CD8-positive, alpha-beta memory T cell (primary cell): ENCODE measurements at regions of chr5 and their contacts with region 1.

Region 1: GRCh38 chr5:140547508-140548299 is at the start of gene EIF4EBP3:
- DNase-seq: peak; percentile 78 to 91 (median 82)
- H3K4me3 ChIP-seq: peak within 1 kb of the TSS; percentile 70
- H3K4me3 Mint-ChIP-seq: peak within 1 kb of the TSS; percentile 80 to 88 (median 84)
- H3K27ac ChIP-seq: peak within 1 kb of the TSS; percentile 66
- H3K27ac Mint-ChIP-seq: peak within 1 kb of the TSS; percentile 87 to 95 (median 94)
- H3K4me1 ChIP-seq: peaks cover 32% of the 10 kb centered on the region
- H3K4me1 Mint-ChIP-seq: peaks cover 21 to 39% (median 33%) of the 10 kb centered on the region in 3 donors
- H3K27me3 ChIP-seq: no peaks in the 10 kb centered on the region
- H3K27me3 Mint-ChIP-seq: no peaks in the 10 kb centered on the region
- total RNA-seq, gene EIF4EBP3: 11.1 to 11.9 TPM

Region 2: DNA sequence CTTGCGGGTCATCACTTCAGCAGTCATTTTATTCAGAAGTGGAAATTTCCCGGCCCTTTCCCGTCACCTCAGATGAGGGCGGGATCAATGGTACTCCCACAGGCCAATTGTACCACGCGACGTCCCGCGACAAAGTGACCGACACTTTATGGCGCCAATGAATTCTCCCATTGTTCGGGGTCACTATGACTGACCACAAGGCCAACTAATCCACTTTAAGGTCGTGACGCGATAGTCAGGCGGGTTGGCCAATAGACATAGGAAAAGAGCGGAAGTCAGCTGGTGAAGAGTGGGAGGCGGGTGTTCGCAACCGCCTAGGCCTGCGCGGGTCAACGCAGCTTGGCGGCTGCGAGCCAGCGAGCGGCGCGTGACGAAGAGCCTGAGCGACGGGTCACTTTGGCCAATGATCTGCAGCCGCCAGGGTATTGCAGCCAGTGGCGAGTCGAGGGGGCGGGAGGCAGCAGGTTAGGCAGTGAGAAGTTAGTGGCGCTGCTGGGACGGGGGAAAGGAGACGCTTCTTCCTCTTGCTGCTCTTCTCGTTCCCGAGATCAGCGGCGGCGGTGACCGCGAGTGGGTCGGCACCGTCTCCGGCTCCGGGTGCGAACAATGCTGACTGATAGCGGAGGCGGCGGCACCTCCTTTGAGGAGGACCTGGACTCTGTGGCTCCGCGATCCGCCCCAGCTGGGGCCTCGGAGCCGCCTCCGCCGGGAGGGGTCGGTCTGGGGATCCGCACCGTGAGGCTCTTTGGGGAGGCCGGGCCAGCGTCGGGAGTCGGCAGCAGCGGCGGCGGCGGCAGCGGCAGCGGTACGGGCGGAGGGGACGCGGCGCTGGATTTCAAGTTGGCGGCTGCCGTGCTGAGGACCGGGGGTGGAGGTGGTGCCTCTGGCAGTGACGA is 146.1 kb before region 1 on chr5 and contains the start of gene ANKHD1:
- CTCF ChIA-PET with region 1: interaction called, 6 read pairs
- POLR2A ChIA-PET with region 1: interaction called, 20 read pairs
- DNase-seq: peak; percentile 93 to 99 (median 98)
- H3K4me3 ChIP-seq: peak within 1 kb of the TSS; percentile 90
- H3K4me3 Mint-ChIP-seq: no peak within 1 kb of the TSS
- H3K27ac ChIP-seq: peak within 1 kb of the TSS; percentile 93
- H3K27ac Mint-ChIP-seq: peak within 1 kb of the TSS in 1 of 8 donors; percentile 90
- H3K4me1 ChIP-seq: peaks cover 44% of the 10 kb centered on the region
- H3K4me1 Mint-ChIP-seq: peaks cover 37 to 43% (median 41%) of the 10 kb centered on the region in 3 donors
- H3K27me3 ChIP-seq: no peaks in the 10 kb centered on the region
- H3K27me3 Mint-ChIP-seq: peaks cover 0 to 2% of the 10 kb centered on the region in 2 donors
- total RNA-seq, gene ANKHD1: 100 to 107 TPM

Region 3: GRCh38 chr5:140413230-140413629 is 134.5 kb before region 1 on chr5:
- CTCF ChIA-PET with region 1: no interaction called
- POLR2A ChIA-PET with region 1: no interaction called
- DNase-seq: no peak
- H3K4me3 ChIP-seq: no peak overlapping the region
- H3K4me3 Mint-ChIP-seq: peak overlapping the region in 1 of 7 donors; percentile 3
- H3K27ac ChIP-seq: no peak overlapping the region
- H3K27ac Mint-ChIP-seq: peak overlapping the region in 3 of 8 donors; percentile 29 to 64 (median 59)
- H3K4me1 ChIP-seq: peaks cover 25% of the 10 kb centered on the region
- H3K4me1 Mint-ChIP-seq: peaks cover 44 to 72% (median 59%) of the 10 kb centered on the region in 3 donors
- H3K27me3 ChIP-seq: no peaks in the 10 kb centered on the region
- H3K27me3 Mint-ChIP-seq: no peaks in the 10 kb centered on the region

Region 4: GRCh38 chr5:140564196-140565023 is 16.7 kb after region 1 on chr5 and contains the starts of genes APBB3 and SLC35A4:
- CTCF ChIA-PET with region 1: interaction called, 34 read pairs
- POLR2A ChIA-PET with region 1: interaction called, 29 read pairs
- DNase-seq: peak; percentile 96 to 99 (median 98)
- H3K4me3 ChIP-seq: peak within 1 kb of the TSS; percentile 90
- H3K4me3 Mint-ChIP-seq: peak within 1 kb of the TSS; percentile 87 to 98 (median 96)
- H3K27ac ChIP-seq: peak within 1 kb of the TSS; percentile 91
- H3K27ac Mint-ChIP-seq: peak within 1 kb of the TSS; percentile 87 to 100 (median 98)
- H3K4me1 ChIP-seq: peaks cover 38% of the 10 kb centered on the region
- H3K4me1 Mint-ChIP-seq: peaks cover 43 to 76% (median 49%) of the 10 kb centered on the region in 3 donors
- H3K27me3 ChIP-seq: no peaks in the 10 kb centered on the region
- H3K27me3 Mint-ChIP-seq: no peaks in the 10 kb centered on the region
- total RNA-seq, gene APBB3: 14.1 to 17.0 TPM
- total RNA-seq, gene SLC35A4: 120 to 126 TPM

Region 5: DNA sequence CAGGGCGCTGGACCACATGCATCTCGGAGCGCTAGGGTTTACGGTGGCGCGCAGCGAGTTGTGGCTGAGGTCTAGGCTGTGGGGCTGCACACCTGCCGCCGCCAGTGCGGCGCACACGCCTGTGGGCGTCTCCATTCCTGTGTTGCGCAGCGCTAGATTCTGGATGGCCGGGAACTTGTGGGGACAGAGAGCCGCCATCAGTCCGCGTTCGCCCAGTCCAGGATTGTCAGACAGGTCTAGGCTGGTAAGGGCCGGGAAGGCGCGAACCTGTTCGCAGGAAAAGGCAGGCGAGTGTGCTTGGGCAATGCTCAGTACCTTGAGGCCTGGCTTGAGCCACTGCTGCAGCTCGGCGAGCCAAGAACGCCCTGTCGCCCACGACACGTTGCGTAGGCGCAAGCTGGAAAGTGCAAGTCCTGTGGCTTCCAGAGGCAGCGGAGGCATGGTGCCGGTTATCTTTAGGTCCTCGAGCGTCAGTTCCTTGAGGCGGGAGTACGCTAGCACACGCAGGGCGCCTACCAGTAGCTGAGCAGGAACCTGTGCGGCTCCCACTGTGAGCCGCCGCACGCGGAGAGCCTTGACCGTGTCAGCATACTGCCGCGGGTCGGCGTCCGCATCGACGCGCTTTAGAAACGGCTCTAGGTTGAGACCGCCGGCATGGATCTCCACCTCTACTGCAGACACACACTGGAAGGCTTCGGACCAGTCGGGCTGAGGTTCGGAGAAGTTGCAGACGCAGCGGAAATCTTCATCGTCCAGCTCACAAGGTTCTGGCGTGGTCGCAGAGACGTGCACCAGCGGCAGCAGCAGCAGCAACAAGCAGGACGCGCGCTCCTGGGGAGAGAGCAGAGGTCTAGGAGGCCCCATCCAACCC is 84.7 kb after region 1 on chr5:
- CTCF ChIA-PET with region 1: interaction called, 10 read pairs
- POLR2A ChIA-PET with region 1: interaction called, 6 read pairs
- DNase-seq: peak; percentile 24 to 63 (median 43)
- H3K4me3 ChIP-seq: peak overlapping the region; percentile 74
- H3K4me3 Mint-ChIP-seq: peak overlapping the region; percentile 85 to 97 (median 91)
- H3K27ac ChIP-seq: no peak overlapping the region
- H3K27ac Mint-ChIP-seq: peak overlapping the region; percentile 33 to 91 (median 88)
- H3K4me1 ChIP-seq: peaks cover 6% of the 10 kb centered on the region
- H3K4me1 Mint-ChIP-seq: peaks cover 15 to 25% (median 25%) of the 10 kb centered on the region in 3 donors
- H3K27me3 ChIP-seq: no peaks in the 10 kb centered on the region
- H3K27me3 Mint-ChIP-seq: peaks cover 7 to 12% of the 10 kb centered on the region in 2 donors